ENCODE measurements at regions of chr19 and their contacts with region 1.

Region 1: DNA sequence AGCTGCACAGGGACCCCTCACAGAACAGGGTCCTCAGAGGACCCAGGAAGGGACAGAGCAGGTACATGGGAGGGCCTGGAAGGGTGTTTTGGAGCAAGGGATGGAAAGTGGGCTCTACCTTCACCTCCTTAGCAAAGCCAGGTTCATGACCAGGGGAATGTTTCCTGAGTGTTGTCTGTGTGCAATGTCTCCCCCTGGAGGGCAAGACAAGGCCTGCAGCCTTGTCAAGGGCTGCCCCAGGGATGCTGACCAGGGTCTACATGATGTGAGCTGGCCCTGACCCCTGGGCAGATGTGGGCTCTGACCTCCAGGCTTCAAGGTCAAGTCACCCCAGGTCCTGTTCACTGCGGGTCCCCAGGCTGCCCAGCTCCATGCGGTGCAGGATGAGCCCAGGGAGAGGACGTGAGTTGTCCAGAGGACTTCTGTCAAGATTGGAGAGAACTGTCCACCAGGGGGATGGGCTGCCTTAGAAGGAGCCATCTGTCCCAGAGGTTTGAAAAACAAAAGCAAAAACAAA is 1.0 kb upstream of the CEACAM1 start:
- DNase-seq: peak; percentile 74 to 85
- H3K4me3 ChIP-seq: no peak overlapping the region
- H3K4me3 Mint-ChIP-seq: no peak overlapping the region
- H3K27ac Mint-ChIP-seq: peak overlapping the region; percentile 27
- H3K4me1 ChIP-seq: peaks cover 17% of the 10 kb centered on the region
- H3K4me1 Mint-ChIP-seq: peaks cover 32% of the 10 kb centered on the region
- H3K27me3 ChIP-seq: no peaks in the 10 kb centered on the region
- H3K27me3 Mint-ChIP-seq: no peaks in the 10 kb centered on the region
- CTCF ChIP-seq: peak; percentile 95 to 98

Region 2: GRCh38 chr19:42440357-42441048 is 88.8 kb before region 1 on chr19:
- CTCF ChIA-PET with region 1: interaction called, 17 read pairs
- POLR2A ChIA-PET with region 1: no interaction called
- intact Hi-C with region 1: loop called (anchors 1 kb)
- DNase-seq: peak; percentile 72 to 82
- H3K4me3 ChIP-seq: no peak overlapping the region
- H3K4me3 Mint-ChIP-seq: peak overlapping the region; percentile 20
- H3K27ac Mint-ChIP-seq: peak overlapping the region; percentile 61
- H3K4me1 ChIP-seq: peaks cover 55% of the 10 kb centered on the region
- H3K4me1 Mint-ChIP-seq: peaks cover 42% of the 10 kb centered on the region
- H3K27me3 ChIP-seq: no peaks in the 10 kb centered on the region
- H3K27me3 Mint-ChIP-seq: no peaks in the 10 kb centered on the region
- CTCF ChIP-seq: peak; percentile 88 to 96

Region 3: GRCh38 chr19:42455621-42456081 is 73.7 kb before region 1 on chr19:
- CTCF ChIA-PET with region 1: interaction called, 70 read pairs
- POLR2A ChIA-PET with region 1: no interaction called
- intact Hi-C with region 1: loop called (anchors 1 kb)
- DNase-seq: peak; percentile 68 to 89
- H3K4me3 ChIP-seq: no peak overlapping the region
- H3K4me3 Mint-ChIP-seq: no peak overlapping the region
- H3K27ac Mint-ChIP-seq: peak overlapping the region; percentile 21
- H3K4me1 ChIP-seq: peaks cover 26% of the 10 kb centered on the region
- H3K4me1 Mint-ChIP-seq: peaks cover 26% of the 10 kb centered on the region
- H3K27me3 ChIP-seq: no peaks in the 10 kb centered on the region
- H3K27me3 Mint-ChIP-seq: no peaks in the 10 kb centered on the region
- CTCF ChIP-seq: no peak

Region 4: DNA sequence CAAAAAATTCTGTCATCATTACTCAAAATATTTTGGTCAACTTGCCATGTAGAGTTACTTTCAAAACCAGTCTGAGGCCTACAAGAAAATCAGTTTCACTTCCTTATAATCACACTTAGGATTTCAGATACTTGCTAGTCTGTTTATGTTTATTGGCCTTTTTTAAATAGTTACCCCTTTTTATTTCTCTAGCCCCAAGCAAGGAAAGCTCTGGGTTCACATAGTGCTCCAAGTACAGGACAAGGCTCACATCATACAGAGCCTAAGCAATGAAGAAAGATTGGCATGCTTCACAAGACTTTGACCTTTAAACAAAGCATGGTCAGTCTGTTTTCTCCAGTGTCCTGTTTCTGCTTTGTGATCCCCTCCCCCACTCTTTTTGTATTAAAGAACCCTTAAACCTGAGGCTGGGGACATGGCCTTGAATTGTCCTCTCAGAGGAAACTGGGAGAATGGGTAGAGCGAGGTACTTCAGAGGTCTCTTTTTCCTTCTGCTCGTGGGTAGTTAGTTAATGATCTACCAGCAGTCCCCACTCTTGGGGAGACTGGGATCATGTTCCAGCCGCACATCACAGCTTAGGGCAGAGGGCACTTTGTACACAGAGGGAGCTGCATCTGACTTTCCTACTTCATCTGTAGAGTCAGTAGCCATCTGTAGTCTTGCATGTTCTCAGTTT is 31.7 kb before region 1 on chr19:
- CTCF ChIA-PET with region 1: interaction called, 5 read pairs
- POLR2A ChIA-PET with region 1: no interaction called
- intact Hi-C with region 1: loop called (anchors 1 kb)
- DNase-seq: peak; percentile 81 to 88
- H3K4me3 ChIP-seq: no peak overlapping the region
- H3K4me3 Mint-ChIP-seq: peak overlapping the region; percentile 69
- H3K27ac Mint-ChIP-seq: peak overlapping the region; percentile 32
- H3K4me1 ChIP-seq: peaks cover 33% of the 10 kb centered on the region
- H3K4me1 Mint-ChIP-seq: peaks cover 49% of the 10 kb centered on the region
- H3K27me3 ChIP-seq: no peaks in the 10 kb centered on the region
- H3K27me3 Mint-ChIP-seq: no peaks in the 10 kb centered on the region
- CTCF ChIP-seq: no peak

Region 5: GRCh38 chr19:42589792-42590191 is 60.5 kb after region 1 on chr19:
- CTCF ChIA-PET with region 1: no interaction called
- POLR2A ChIA-PET with region 1: no interaction called
- intact Hi-C with region 1: no loop called
- DNase-seq: no peak
- H3K4me3 ChIP-seq: no peak overlapping the region
- H3K4me3 Mint-ChIP-seq: no peak overlapping the region
- H3K27ac Mint-ChIP-seq: no peak overlapping the region
- H3K4me1 ChIP-seq: no peaks in the 10 kb centered on the region
- H3K4me1 Mint-ChIP-seq: no peaks in the 10 kb centered on the region
- H3K27me3 ChIP-seq: no peaks in the 10 kb centered on the region
- H3K27me3 Mint-ChIP-seq: peaks cover 13% of the 10 kb centered on the region
- CTCF ChIP-seq: no peak